ENCODE measurements at regions of chrX and their contacts with region 1.

Region 1: GRCh38 chrX:154370882-154371770 is 3.3 kb downstream of the FLNA start:
- DNase-seq: peak; percentile 75 to 98
- H3K4me3 ChIP-seq: peak overlapping the region; percentile 60; the same call in 1 of the 2 replicates
- H3K27ac ChIP-seq: no peak overlapping the region
- H3K4me1 ChIP-seq: no peaks in the 10 kb centered on the region; the same call in 1 of the 2 replicates
- H3K27me3 ChIP-seq: no peaks in the 10 kb centered on the region
- CTCF ChIP-seq: no peak

Region 2: GRCh38 chrX:153724252-153725040 is 646.7 kb before region 1 on chrX and contains the starts of genes ABCD1 and BCAP31:
- CTCF ChIA-PET with region 1: no interaction called
- POLR2A ChIA-PET with region 1: no interaction called
- intact Hi-C with region 1: loop called (anchors 2 kb)
- DNase-seq: peak; percentile 76 to 97
- H3K4me3 ChIP-seq: peak within 1 kb of the TSS; percentile 85
- H3K27ac ChIP-seq: peak within 1 kb of the TSS; percentile 91
- H3K4me1 ChIP-seq: peaks cover 34% of the 10 kb centered on the region
- H3K27me3 ChIP-seq: no peaks in the 10 kb centered on the region
- CTCF ChIP-seq: no peak
- total RNA-seq, gene ABCD1: 40.0 and 44.9 TPM in 2 replicates
- total RNA-seq, gene BCAP31: 522 and 541 TPM in 2 replicates

Region 3: DNA sequence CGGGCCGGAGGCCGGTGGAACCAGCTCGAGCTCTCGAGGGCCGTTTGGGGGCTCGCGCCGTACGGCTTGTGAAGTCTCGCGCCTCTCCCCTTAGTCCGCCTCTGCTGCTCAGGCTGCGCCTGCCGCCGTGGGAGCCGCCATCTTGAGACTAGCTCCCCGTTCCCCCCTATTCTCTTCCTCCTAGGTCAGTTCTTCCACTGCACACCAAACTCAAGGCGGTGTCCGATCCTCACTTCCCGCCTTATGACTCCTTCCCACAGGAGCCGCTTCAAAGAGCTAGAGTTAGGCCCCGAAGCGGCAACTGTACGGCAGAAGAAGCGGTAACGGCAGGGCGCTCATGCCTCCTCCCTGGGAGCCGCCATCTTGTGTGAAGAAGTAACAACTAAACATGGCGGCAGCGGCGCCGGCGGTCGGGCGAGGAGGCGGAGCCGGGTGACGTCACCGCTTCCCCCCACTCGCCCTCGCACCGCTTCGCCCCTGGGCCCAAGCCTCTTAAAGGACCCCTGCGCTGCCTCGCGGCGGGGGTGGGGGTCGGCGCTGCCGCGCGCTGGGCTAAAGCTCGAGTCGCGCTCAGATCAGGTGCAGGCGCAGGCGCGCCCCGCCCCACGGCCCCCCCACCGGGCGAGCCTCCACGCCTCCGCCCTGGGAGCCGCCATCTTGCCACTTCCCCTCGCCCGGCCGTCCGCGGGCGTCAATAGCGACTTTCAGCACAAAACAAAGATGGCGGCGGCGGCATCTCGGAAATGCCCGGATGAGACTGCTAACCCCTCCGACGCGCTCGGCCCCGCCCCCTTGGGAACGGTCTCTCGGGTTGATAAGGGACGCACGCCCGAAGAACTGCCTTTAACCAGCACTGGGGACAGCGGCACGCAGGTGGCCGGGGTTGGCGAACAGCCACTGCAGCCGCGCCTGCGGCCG is 399.4 kb before region 1 on chrX and contains the start of gene HCFC1:
- CTCF ChIA-PET with region 1: no interaction called
- POLR2A ChIA-PET with region 1: interaction called, 22 read pairs
- intact Hi-C with region 1: no loop called
- DNase-seq: peak; percentile 75 to 90
- H3K4me3 ChIP-seq: peak within 1 kb of the TSS; percentile 92
- H3K27ac ChIP-seq: peak within 1 kb of the TSS; percentile 99
- H3K4me1 ChIP-seq: peaks cover 13% of the 10 kb centered on the region
- H3K27me3 ChIP-seq: no peaks in the 10 kb centered on the region
- CTCF ChIP-seq: no peak
- total RNA-seq, gene HCFC1: 67.1 and 79.9 TPM in 2 replicates

Region 4: GRCh38 chrX:154484255-154485154 is 113.4 kb after region 1 on chrX:
- CTCF ChIA-PET with region 1: interaction called, 6 read pairs
- POLR2A ChIA-PET with region 1: interaction called, 12 read pairs
- intact Hi-C with region 1: loop called (anchors 2 kb)
- DNase-seq: peak in 1 of 2 experiments; percentile 71
- H3K4me3 ChIP-seq: no peak overlapping the region
- H3K27ac ChIP-seq: no peak overlapping the region
- H3K4me1 ChIP-seq: peaks cover 24% of the 10 kb centered on the region
- H3K27me3 ChIP-seq: no peaks in the 10 kb centered on the region
- CTCF ChIP-seq: no peak

Region 5: GRCh38 chrX:154534862-154535670 is 163.9 kb after region 1 on chrX:
- CTCF ChIA-PET with region 1: interaction called, 9 read pairs
- POLR2A ChIA-PET with region 1: interaction called, 14 read pairs
- intact Hi-C with region 1: loop called (anchors 5 kb)
- DNase-seq: peak; percentile 51 to 89
- H3K4me3 ChIP-seq: no peak overlapping the region
- H3K27ac ChIP-seq: no peak overlapping the region
- H3K4me1 ChIP-seq: peaks cover 26% of the 10 kb centered on the region
- H3K27me3 ChIP-seq: no peaks in the 10 kb centered on the region
- CTCF ChIP-seq: peak; percentile 85

Region 6: DNA sequence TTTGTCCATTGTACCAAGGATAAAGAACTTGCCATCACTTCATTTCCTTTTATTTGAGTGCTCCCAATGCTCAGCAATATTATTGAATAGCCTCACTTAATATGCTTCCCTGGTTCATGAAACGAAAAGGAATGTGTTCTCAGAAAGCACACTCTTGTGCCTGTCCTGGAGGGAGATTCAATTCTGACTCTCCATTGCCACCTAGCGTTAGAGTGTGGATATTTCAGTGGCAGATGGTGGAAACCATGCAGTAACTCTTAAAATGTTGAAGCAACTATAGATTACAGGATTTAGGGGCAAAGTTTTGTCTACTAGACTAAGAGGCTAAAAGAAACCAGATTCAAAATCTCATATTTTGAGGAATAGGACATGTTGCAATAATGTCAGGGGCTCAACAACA is 343.8 kb after region 1 on chrX:
- CTCF ChIA-PET with region 1: interaction called, 6 read pairs
- POLR2A ChIA-PET with region 1: no interaction called
- intact Hi-C with region 1: loop called (anchors 1 kb)
- DNase-seq: peak in 1 of 2 experiments; percentile 43
- H3K4me3 ChIP-seq: no peak overlapping the region
- H3K27ac ChIP-seq: no peak overlapping the region
- H3K4me1 ChIP-seq: peaks cover 21% of the 10 kb centered on the region; the same call in 1 of the 2 replicates
- H3K27me3 ChIP-seq: no peaks in the 10 kb centered on the region
- CTCF ChIP-seq: peak; percentile 85